ENCODE measurements at regions of chr11 and their contacts with region 1.

Region 1: GRCh38 chr11:125887373-125888324 is at the start of gene HYLS1:
- DNase-seq: peak; percentile 97
- ATAC-seq: peak; percentile 90
- H3K4me3 Mint-ChIP-seq: peak within 1 kb of the TSS; percentile 78
- H3K27ac Mint-ChIP-seq: peak within 1 kb of the TSS; percentile 87
- H3K4me1 Mint-ChIP-seq: peaks cover 41% of the 10 kb centered on the region
- H3K27me3 Mint-ChIP-seq: no peaks in the 10 kb centered on the region
- total RNA-seq, gene HYLS1: 7.2 to 9.3 TPM

Region 2: GRCh38 chr11:124622531-124623451 is 1264.9 kb before region 1 on chr11 and contains the start of gene TBRG1:
- CTCF ChIA-PET with region 1: no interaction called
- POLR2A ChIA-PET with region 1: no interaction called
- intact Hi-C with region 1: loop called in 1 of 2 experiments (anchors 5 kb)
- DNase-seq: peak; percentile 87
- ATAC-seq: peak; percentile 99
- H3K4me3 Mint-ChIP-seq: peak within 1 kb of the TSS; percentile 93
- H3K27ac Mint-ChIP-seq: peak within 1 kb of the TSS; percentile 95
- H3K4me1 Mint-ChIP-seq: peaks cover 22% of the 10 kb centered on the region
- H3K27me3 Mint-ChIP-seq: peaks cover 5% of the 10 kb centered on the region
- total RNA-seq, gene TBRG1: 29.6 to 40.6 TPM

Region 3: DNA sequence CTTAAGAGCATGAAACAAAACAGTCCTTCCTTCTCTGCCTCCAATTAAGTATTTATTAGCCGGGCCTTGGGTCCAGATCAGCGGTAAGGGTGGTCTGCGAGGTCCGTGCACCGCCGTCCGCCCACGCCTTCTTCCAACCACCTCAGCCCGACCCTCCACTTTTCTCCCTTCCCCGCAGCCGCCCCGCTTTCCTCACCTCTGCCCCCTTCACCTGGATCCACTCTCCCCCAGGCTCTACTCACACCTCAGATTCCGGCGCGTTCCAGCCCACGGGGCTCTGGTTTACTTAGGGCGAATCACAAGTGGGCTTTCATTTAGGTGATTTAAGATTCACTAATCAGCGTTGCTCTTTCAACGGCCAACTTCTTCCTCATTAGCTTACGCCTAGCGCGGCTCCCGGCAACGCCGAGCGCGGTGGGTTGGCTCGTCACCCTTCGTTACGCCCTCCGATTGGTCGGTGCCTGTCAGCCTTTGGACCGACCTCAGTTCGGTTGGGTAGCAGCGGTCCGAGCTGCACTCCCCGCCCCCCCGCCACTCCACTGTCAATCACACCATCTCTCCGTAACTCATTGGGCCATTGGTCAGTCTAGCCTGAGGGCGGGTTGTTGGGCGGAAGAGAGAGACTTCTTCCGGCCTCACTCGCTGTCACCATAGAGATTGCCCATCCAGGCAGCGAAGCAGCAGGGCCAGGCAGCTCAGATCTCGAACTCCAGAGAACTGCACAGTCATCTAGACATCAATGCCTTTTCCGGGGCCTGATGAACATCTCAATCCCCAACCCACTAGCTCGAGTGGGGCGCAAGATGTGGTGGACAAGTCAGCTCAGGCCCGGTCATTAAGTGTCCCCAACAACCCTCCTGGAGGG is 776.1 kb before region 1 on chr11 and contains the start of gene TMEM218:
- CTCF ChIA-PET with region 1: no interaction called
- POLR2A ChIA-PET with region 1: no interaction called
- intact Hi-C with region 1: loop called in 1 of 2 experiments (anchors 1 kb)
- DNase-seq: peak; percentile 98
- ATAC-seq: peak; percentile 99
- H3K4me3 Mint-ChIP-seq: peak within 1 kb of the TSS; percentile 93
- H3K27ac Mint-ChIP-seq: peak within 1 kb of the TSS; percentile 95
- H3K4me1 Mint-ChIP-seq: peaks cover 18% of the 10 kb centered on the region
- H3K27me3 Mint-ChIP-seq: no peaks in the 10 kb centered on the region
- total RNA-seq, gene TMEM218: 11.3 TPM

Region 4: GRCh38 chr11:125625630-125626287 is 261.9 kb before region 1 on chr11:
- CTCF ChIA-PET with region 1: interaction called, 3 read pairs
- POLR2A ChIA-PET with region 1: interaction called, 11 read pairs
- intact Hi-C with region 1: loop called in 1 of 2 experiments (anchors 1 kb)
- DNase-seq: peak; percentile 92
- ATAC-seq: peak; percentile 88
- H3K4me3 Mint-ChIP-seq: peak overlapping the region; percentile 88
- H3K27ac Mint-ChIP-seq: peak overlapping the region; percentile 98
- H3K4me1 Mint-ChIP-seq: peaks cover 17% of the 10 kb centered on the region
- H3K27me3 Mint-ChIP-seq: no peaks in the 10 kb centered on the region

Region 5: DNA sequence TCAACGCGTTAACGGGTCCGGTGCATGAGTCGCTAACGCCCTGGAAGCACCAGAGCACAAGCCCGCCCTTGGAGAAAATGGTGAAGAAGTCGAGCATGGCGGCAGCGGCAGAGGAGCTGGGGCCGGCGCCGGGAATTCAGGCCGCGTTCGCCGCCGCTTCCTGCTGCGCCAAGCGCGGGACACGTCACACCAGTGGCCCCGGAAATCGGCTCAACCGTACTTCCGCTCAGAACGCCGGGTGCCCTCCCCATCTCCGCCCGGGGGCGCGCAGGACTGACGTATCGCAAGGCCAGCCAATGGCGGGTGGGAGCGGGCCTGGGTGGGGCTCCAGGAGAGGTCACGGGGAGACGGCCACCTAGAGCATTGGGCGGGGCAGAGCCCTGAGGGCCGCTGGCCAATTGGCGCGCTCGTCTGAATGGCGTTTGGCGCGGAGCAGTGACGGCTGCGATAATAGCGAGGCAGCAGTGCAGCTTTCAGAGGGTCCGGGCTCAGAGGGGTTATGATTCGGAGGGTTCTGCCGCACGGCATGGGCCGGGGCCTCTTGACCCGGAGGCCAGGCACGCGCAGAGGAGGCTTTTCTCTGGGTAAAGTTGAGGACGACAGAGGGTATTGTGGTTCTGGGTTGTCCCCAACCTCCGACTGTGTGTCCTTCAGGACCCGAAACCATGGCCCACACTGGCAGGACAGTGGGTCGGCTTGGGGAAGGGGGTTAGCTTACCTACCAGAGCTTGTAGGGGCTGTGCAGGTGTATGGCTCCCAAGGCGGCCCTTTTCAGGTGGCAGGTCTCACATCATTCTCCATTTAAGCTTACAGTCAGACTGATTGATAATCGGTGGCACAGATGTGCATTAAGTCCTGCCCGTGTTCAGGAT is 381.3 kb after region 1 on chr11 and contains the starts of genes FOXRED1 and SRPRA:
- CTCF ChIA-PET with region 1: no interaction called
- POLR2A ChIA-PET with region 1: no interaction called
- intact Hi-C with region 1: loop called in 1 of 2 experiments (anchors 1 kb)
- DNase-seq: peak; percentile 100
- ATAC-seq: peak; percentile 100
- H3K4me3 Mint-ChIP-seq: peak within 1 kb of the TSS; percentile 86
- H3K27ac Mint-ChIP-seq: peak within 1 kb of the TSS; percentile 95
- H3K4me1 Mint-ChIP-seq: peaks cover 38% of the 10 kb centered on the region
- H3K27me3 Mint-ChIP-seq: no peaks in the 10 kb centered on the region
- total RNA-seq, gene FOXRED1: 39.0 to 43.7 TPM
- total RNA-seq, gene SRPRA: 131 to 139 TPM

Region 6: GRCh38 chr11:126355324-126355925 is 467.8 kb after region 1 on chr11 and contains the start of gene ST3GAL4:
- CTCF ChIA-PET with region 1: no interaction called
- POLR2A ChIA-PET with region 1: no interaction called
- intact Hi-C with region 1: loop called in 1 of 2 experiments (anchors 2 kb)
- DNase-seq: peak; percentile 86
- ATAC-seq: peak; percentile 77
- H3K4me3 Mint-ChIP-seq: peak within 1 kb of the TSS; percentile 93
- H3K27ac Mint-ChIP-seq: peak within 1 kb of the TSS; percentile 88
- H3K4me1 Mint-ChIP-seq: peaks cover 29% of the 10 kb centered on the region
- H3K27me3 Mint-ChIP-seq: no peaks in the 10 kb centered on the region
- total RNA-seq, gene ST3GAL4: 7.5 to 9.1 TPM

Measured in activated CD4-positive, alpha-beta T cell treated with anti-CD3 and anti-CD28 coated beads for 36 hours (primary cell).